ENCODE measurements at regions of chr7 and their contacts with region 1.

Region 1: DNA sequence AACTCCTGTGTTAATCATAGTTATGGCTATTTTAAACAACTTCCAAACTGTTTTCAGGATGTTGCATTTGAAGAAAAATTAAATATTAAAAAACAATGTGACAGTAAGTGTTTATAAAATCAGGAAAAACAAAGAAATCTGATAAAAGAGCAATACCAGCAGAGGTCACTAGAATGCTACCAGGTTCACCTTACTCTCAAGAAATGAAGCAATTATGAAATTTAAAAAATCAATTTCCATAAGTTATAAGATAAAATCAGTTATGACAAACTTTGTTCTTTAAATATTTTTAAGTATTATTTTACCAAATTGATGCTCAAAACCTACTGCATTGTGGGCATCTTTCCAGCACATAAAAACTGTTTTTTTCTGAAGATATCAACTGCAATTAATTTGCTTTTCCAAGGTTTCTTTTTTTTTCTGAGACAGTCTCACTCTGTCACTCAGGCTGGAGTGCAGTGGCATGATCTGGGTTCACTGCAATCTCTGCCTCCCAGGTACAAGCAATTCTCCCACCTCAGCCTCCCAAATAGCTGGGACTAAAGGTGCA is 50.7 kb upstream of the RHEB start:
- DNase-seq: no peak
- ATAC-seq: no peak
- H3K4me3 ChIP-seq: no peak overlapping the region
- H3K27ac ChIP-seq: no peak overlapping the region
- H3K4me1 ChIP-seq: no peaks in the 10 kb centered on the region; the same call in 1 of the 2 replicates
- H3K27me3 ChIP-seq: no peaks in the 10 kb centered on the region
- CTCF ChIP-seq: peak; percentile 51; the same call in 1 of the 2 replicates

Region 2: GRCh38 chr7:151658778-151659177 is 88.3 kb after region 1 on chr7:
- CTCF ChIA-PET with region 1: interaction called, 11 read pairs
- POLR2A ChIA-PET with region 1: no interaction called
- in situ Hi-C with region 1: no loop called
- intact Hi-C with region 1: no loop called
- DNase-seq: no peak
- ATAC-seq: no peak
- H3K4me3 ChIP-seq: no peak overlapping the region
- H3K27ac ChIP-seq: no peak overlapping the region
- H3K4me1 ChIP-seq: peaks cover 8% of the 10 kb centered on the region; the same call in 1 of the 2 replicates
- H3K27me3 ChIP-seq: no peaks in the 10 kb centered on the region
- CTCF ChIP-seq: no peak